ENCODE measurements at regions of chr13 and their contacts with region 1.

Region 1: GRCh38 chr13:64471916-64472315 is 2758.2 kb downstream of the PCDH9 start:
- DNase-seq: no peak

Region 2: DNA sequence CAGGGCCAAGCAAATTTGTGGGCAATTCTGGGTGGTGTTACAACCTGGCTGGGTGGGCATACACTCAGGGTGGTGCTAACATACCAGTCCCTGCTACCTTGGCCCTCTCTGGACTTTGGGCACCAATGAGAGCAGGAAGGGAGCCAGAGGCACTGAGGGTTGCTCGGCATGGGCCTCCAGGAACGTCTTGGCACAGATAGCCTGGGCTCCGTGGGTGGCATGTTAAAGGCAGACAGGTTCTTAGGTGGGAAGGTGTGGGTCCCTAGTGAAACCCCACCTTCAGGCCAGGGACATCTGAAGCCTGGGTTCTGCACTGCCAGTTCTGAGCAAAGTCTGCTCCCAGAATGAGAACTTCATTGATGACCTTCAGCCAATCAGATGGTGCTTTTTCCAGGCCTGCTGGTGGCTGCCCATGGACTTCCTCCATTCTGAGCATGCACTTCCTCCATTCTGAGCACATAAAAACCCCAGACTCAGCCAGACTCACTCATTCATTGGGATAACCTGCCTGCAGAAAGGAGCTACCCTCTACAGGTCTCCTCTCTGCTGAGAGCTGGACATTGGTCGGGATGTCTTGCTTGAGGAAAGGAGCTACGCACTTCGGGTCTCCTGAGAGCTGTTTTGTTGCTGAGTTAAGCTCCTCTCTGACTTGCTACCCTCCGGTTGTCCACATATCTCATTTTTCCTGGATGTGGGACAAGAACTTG is 191.1 kb after region 1 on chr13:
- intact Hi-C with region 1: no loop called
- DNase-seq: peak in 2 of 10 donors; percentile 63 to 70

Region 3: DNA sequence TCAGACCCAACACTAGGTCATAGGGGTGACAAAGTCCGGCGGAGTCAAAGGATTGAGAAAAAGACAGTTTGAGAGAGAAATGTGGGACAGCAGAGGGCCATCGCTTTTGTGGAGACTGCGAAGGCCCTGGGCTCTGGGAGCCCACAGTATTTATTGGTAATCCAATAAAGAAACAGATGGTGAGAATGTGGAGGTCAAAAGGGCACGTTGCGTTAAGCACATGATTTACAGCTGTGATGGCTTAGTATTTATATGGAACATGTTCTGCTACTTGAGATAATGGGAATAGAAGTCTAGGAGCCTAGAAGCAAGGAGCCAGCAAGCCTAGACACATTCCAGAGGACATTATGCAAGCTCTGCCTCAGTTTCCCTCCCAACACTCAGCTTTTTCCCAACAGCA is 237.2 kb after region 1 on chr13:
- intact Hi-C with region 1: no loop called
- DNase-seq: no peak

Region 4: GRCh38 chr13:65638572-65639168 is 1166.8 kb after region 1 on chr13:
- intact Hi-C with region 1: loop called (anchors 10 kb)
- DNase-seq: no peak